Calu3 (cell line): ENCODE measurements at regions of chr3 and their contacts with region 1.

Region 1: DNA sequence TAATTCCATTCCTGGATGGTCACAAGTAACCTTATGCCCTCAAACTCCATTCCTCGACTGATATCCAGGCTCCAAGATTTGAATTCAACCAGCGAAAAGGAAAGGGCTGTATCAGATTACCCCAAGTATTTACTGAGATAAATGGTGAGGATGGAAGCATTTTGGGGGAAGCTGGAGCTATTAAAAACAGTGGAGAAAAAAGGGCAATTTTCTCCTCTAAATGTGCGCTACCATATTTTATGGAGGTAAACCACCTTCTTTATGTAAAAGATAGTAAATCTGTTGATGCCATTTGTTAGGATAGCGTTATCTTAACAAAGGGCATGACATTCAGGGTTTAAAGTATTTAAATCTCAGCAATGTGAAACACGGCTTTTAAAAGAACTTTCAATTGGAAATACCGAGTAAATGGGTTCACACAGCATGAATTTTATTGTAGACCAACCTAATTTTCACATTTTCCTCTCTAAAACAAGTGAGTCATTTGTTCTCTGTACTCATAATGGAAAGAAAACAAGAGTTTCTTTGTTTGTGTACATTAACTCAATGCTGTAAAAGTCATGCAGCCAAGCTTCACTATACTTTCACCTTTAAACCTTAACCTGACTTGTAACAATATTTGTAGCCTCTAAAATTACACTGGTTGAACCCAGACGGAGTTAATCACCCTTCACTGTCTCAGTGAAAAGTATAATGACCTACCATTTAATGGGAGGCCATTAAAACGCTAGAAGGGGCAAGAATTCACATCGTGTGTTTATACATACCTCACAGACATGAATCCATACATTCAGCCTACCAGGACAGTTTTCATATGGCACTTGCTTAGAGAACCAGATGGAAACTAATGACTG is 773.4 kb downstream of the ROBO1 start:
- DNase-seq: no peak
- H3K4me3 Mint-ChIP-seq: peak overlapping the region; percentile 45
- H3K27ac Mint-ChIP-seq: peak overlapping the region; percentile 83
- H3K4me1 Mint-ChIP-seq: peaks cover 7% of the 10 kb centered on the region
- H3K27me3 Mint-ChIP-seq: no peaks in the 10 kb centered on the region
- CTCF ChIP-seq: no peak

Region 2: GRCh38 chr3:78872195-78872594 is 122.2 kb before region 1 on chr3:
- CTCF ChIA-PET with region 1: no interaction called
- intact Hi-C with region 1: no loop called
- DNase-seq: no peak
- H3K4me3 Mint-ChIP-seq: no peak overlapping the region
- H3K27ac Mint-ChIP-seq: no peak overlapping the region
- H3K4me1 Mint-ChIP-seq: no peaks in the 10 kb centered on the region
- H3K27me3 Mint-ChIP-seq: no peaks in the 10 kb centered on the region
- CTCF ChIP-seq: no peak

Region 3: GRCh38 chr3:79027593-79027992 is 33.2 kb after region 1 on chr3:
- CTCF ChIA-PET with region 1: no interaction called
- intact Hi-C with region 1: loop called (anchors 5 kb)
- DNase-seq: no peak
- H3K4me3 Mint-ChIP-seq: no peak overlapping the region
- H3K27ac Mint-ChIP-seq: no peak overlapping the region
- H3K4me1 Mint-ChIP-seq: no peaks in the 10 kb centered on the region
- H3K27me3 Mint-ChIP-seq: no peaks in the 10 kb centered on the region
- CTCF ChIP-seq: no peak